Dorsolateral prefrontal cortex (tissue), 120 donors: ENCODE measurements at regions of chr2 and their contacts with region 1.

Region 1: GRCh38 chr2:131105156-131105949 is at the start of gene PLEKHB2:
- DNase-seq: peak; percentile 87 to 98 (median 90)
- H3K4me3 ChIP-seq: peak within 1 kb of the TSS; percentile 69 to 100 (median 97)
- H3K27ac ChIP-seq: peak within 1 kb of the TSS; percentile 53 to 98 (median 92)
- H3K27me3 ChIP-seq: no peaks in the 10 kb centered on the region
- CTCF ChIP-seq: peak in 50 of 56 donors; percentile 26 to 74 (median 48)
- total RNA-seq, gene PLEKHB2: 67.0 to 178 (median 121) TPM

Region 2: GRCh38 chr2:130878316-130878715 is 227.0 kb before region 1 on chr2:
- intact Hi-C with region 1: no loop called
- DNase-seq: peak in 3 of 10 donors; percentile 34 to 70 (median 49)
- H3K4me3 ChIP-seq: no peak overlapping the region
- H3K27ac ChIP-seq: peak overlapping the region in 15 of 59 donors; percentile 2 to 66 (median 22)
- H3K27me3 ChIP-seq: no peaks in the 10 kb centered on the region
- CTCF ChIP-seq: peak in 4 of 56 donors; percentile 10 to 33 (median 16)

Region 3: GRCh38 chr2:131093006-131093695 is 12.2 kb before region 1 on chr2 and contains the start of gene FAM168B:
- intact Hi-C with region 1: loop called (anchors 1 kb)
- DNase-seq: peak; percentile 63 to 89 (median 80)
- H3K4me3 ChIP-seq: peak within 1 kb of the TSS; percentile 59 to 97 (median 85)
- H3K27ac ChIP-seq: peak within 1 kb of the TSS; percentile 79 to 99 (median 97)
- H3K27me3 ChIP-seq: no peaks in the 10 kb centered on the region
- CTCF ChIP-seq: peak in 21 of 56 donors; percentile 4 to 58 (median 32)
- total RNA-seq, gene FAM168B: 119 to 220 (median 170) TPM

Region 4: GRCh38 chr2:131126436-131126835 is 21.1 kb after region 1 on chr2:
- intact Hi-C with region 1: loop called in 1 of 2 experiments (anchors 2 kb)
- DNase-seq: no peak
- H3K4me3 ChIP-seq: peak overlapping the region in 18 of 59 donors; percentile 1 to 42 (median 20)
- H3K27ac ChIP-seq: peak overlapping the region in 56 of 59 donors; percentile 0 to 93 (median 74)
- H3K27me3 ChIP-seq: no peaks in the 10 kb centered on the region
- CTCF ChIP-seq: no peak